Activated CD4-positive, alpha-beta T cell treated with anti-CD3 and anti-CD28 coated beads for 36 hours (primary cell): ENCODE measurements at regions of chr14 and their contacts with region 1.

Region 1: DNA sequence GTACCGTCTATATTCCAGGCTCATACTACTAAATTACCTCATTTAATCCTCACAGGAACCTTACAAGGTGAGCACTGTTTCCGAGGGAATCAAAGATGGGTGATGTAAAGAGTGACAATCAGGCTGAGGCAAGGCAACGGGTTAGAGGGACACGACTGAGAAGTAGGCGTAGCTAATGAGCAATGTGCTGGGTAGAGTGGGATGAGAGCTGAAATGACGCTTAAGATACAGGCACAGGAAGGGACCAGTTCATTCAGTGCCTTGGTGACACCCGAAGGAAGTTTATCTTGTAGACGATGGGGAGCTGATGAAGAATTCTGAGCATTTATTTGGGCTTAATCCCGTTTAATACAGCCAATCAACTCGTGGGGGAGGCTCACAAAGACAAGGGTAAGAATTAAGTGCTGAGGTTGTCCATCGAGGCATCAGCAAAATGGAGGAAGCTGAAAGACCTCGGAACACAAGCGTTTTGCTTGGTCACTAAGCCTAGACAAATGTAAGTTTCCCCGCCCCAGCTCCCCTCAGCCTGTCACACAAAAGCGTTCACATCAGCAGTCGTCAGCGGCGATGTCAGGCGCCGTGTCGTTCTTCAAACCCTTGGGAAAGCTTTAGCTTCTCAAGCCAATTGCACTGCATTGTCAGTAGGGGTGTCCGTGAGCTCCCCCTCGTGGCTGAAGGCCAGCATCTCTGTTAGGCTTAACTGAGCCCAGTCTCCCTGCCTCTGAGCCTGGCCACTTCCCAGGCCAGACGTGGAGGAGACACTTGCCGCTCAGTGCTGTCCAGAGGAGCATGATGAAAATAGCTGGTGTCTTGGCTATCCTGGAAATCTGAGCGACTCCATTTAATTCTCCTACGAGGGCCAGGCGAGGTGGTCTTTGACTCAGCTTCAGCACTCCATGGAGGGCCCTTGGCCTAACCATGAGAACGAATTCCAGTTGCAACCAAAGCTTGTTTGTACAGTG is 288.5 kb upstream of the G2E3 start:
- DNase-seq: peak; percentile 85
- ATAC-seq: peak; percentile 94
- H3K4me3 Mint-ChIP-seq: peak overlapping the region; percentile 6
- H3K27ac Mint-ChIP-seq: no peak overlapping the region
- H3K4me1 Mint-ChIP-seq: peaks cover 8% of the 10 kb centered on the region
- H3K27me3 Mint-ChIP-seq: peaks cover 16% of the 10 kb centered on the region

Region 2: GRCh38 chr14:28751467-28752058 is 1518.9 kb before region 1 on chr14:
- CTCF ChIA-PET with region 1: interaction called, 5 read pairs
- POLR2A ChIA-PET with region 1: no interaction called
- intact Hi-C with region 1: loop called in 1 of 2 experiments (anchors 5 kb)
- DNase-seq: peak; percentile 36
- ATAC-seq: no peak
- H3K4me3 Mint-ChIP-seq: no peak overlapping the region
- H3K27ac Mint-ChIP-seq: no peak overlapping the region
- H3K4me1 Mint-ChIP-seq: no peaks in the 10 kb centered on the region
- H3K27me3 Mint-ChIP-seq: peaks cover 27% of the 10 kb centered on the region

Region 3: GRCh38 chr14:30283826-30284446 is 13.5 kb after region 1 on chr14:
- CTCF ChIA-PET with region 1: interaction called, 14 read pairs
- POLR2A ChIA-PET with region 1: no interaction called
- intact Hi-C with region 1: no loop called
- DNase-seq: peak; percentile 47
- ATAC-seq: peak; percentile 47
- H3K4me3 Mint-ChIP-seq: no peak overlapping the region
- H3K27ac Mint-ChIP-seq: no peak overlapping the region
- H3K4me1 Mint-ChIP-seq: peaks cover 1% of the 10 kb centered on the region
- H3K27me3 Mint-ChIP-seq: peaks cover 3% of the 10 kb centered on the region

Region 4: GRCh38 chr14:30443368-30444007 is 173.0 kb after region 1 on chr14:
- CTCF ChIA-PET with region 1: interaction called, 14 read pairs
- POLR2A ChIA-PET with region 1: no interaction called
- intact Hi-C with region 1: no loop called
- DNase-seq: no peak
- ATAC-seq: no peak
- H3K4me3 Mint-ChIP-seq: no peak overlapping the region
- H3K27ac Mint-ChIP-seq: no peak overlapping the region
- H3K4me1 Mint-ChIP-seq: no peaks in the 10 kb centered on the region
- H3K27me3 Mint-ChIP-seq: peaks cover 5% of the 10 kb centered on the region

Region 5: GRCh38 chr14:30521899-30522736 is 251.6 kb after region 1 on chr14:
- CTCF ChIA-PET with region 1: interaction called, 7 read pairs
- POLR2A ChIA-PET with region 1: no interaction called
- intact Hi-C with region 1: loop called in 1 of 2 experiments (anchors 2 kb)
- DNase-seq: no peak
- ATAC-seq: peak; percentile 39
- H3K4me3 Mint-ChIP-seq: no peak overlapping the region
- H3K27ac Mint-ChIP-seq: no peak overlapping the region
- H3K4me1 Mint-ChIP-seq: peaks cover 10% of the 10 kb centered on the region
- H3K27me3 Mint-ChIP-seq: no peaks in the 10 kb centered on the region